ENCODE measurements at regions of chr6 and their contacts with region 1.

Region 1: GRCh38 chr6:107284805-107285204 is 169.5 kb upstream of the BEND3 start:
- DNase-seq: no peak
- ATAC-seq: no peak
- H3K4me3 ChIP-seq: no peak overlapping the region
- H3K27ac ChIP-seq: no peak overlapping the region
- H3K4me1 ChIP-seq: no peaks in the 10 kb centered on the region
- H3K27me3 ChIP-seq: no peaks in the 10 kb centered on the region
- CTCF ChIP-seq: no peak
- POLR2A ChIP-seq: no peak
- RAD21 ChIP-seq: no peak

Region 2: DNA sequence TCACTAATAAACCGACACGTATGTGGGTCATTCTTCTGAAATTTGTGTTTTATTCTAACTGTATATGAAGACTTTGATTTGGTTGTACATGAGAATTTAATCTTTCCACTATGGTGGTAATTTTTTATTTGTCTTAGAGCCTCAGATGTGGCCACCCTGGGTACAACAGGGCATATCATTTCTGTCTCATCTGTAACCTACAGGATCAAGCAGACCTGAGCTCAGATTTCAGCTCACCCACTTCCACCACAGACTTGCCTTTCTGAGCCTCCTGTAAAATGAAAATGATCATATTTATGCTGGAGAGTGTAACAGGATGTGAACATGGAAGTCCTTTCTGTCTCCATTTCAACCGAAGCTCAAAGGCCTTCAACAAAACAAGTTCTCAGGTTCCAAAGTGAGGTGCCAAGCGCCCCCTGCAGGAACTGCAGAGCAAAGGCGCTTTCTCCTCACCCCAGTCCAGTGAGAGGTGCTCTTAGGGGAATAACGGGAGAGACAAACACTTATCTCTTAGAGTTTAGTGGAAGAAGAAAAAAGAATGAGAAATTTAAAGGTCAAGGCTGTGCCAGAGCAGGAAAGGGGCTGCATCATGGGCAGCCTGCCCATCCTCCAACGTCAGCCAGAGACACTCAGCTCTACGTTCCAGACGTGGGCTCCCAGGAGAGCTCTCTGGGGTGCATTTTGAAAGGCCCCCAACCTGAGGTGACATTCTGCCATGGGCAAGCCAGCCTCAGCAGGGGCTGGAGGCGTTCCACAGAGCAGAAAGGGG is 287.2 kb before region 1 on chr6:
- CTCF ChIA-PET with region 1: no interaction called
- POLR2A ChIA-PET with region 1: no interaction called
- dilution Hi-C with region 1: no loop called
- in situ Hi-C with region 1: no loop called
- intact Hi-C with region 1: no loop called
- DNase-seq: peak; percentile 51
- ATAC-seq: peak; percentile 78
- H3K4me3 ChIP-seq: no peak overlapping the region
- H3K27ac ChIP-seq: no peak overlapping the region
- H3K4me1 ChIP-seq: no peaks in the 10 kb centered on the region
- H3K27me3 ChIP-seq: no peaks in the 10 kb centered on the region
- CTCF ChIP-seq: peak; percentile 66
- POLR2A ChIP-seq: no peak
- RAD21 ChIP-seq: peak; percentile 48; the same call in 1 of the 2 replicates

Region 3: GRCh38 chr6:107244082-107244741 is 40.6 kb before region 1 on chr6:
- CTCF ChIA-PET with region 1: no interaction called
- POLR2A ChIA-PET with region 1: no interaction called
- dilution Hi-C with region 1: no loop called
- in situ Hi-C with region 1: no loop called
- intact Hi-C with region 1: no loop called
- DNase-seq: no peak
- ATAC-seq: no peak
- H3K4me3 ChIP-seq: no peak overlapping the region
- H3K27ac ChIP-seq: no peak overlapping the region
- H3K4me1 ChIP-seq: no peaks in the 10 kb centered on the region
- H3K27me3 ChIP-seq: no peaks in the 10 kb centered on the region
- CTCF ChIP-seq: no peak
- POLR2A ChIP-seq: no peak
- RAD21 ChIP-seq: no peak

Region 4: GRCh38 chr6:107331409-107332386 is 46.9 kb after region 1 on chr6:
- CTCF ChIA-PET with region 1: no interaction called
- POLR2A ChIA-PET with region 1: interaction called, 15 read pairs
- dilution Hi-C with region 1: no loop called
- in situ Hi-C with region 1: no loop called
- intact Hi-C with region 1: no loop called
- DNase-seq: peak; percentile 53
- ATAC-seq: no peak
- H3K4me3 ChIP-seq: no peak overlapping the region
- H3K27ac ChIP-seq: no peak overlapping the region
- H3K4me1 ChIP-seq: no peaks in the 10 kb centered on the region
- H3K27me3 ChIP-seq: no peaks in the 10 kb centered on the region
- CTCF ChIP-seq: no peak
- POLR2A ChIP-seq: no peak
- RAD21 ChIP-seq: no peak

Region 5: GRCh38 chr6:107509506-107509905 is 224.7 kb after region 1 on chr6:
- CTCF ChIA-PET with region 1: no interaction called
- POLR2A ChIA-PET with region 1: no interaction called
- dilution Hi-C with region 1: no loop called
- in situ Hi-C with region 1: no loop called
- intact Hi-C with region 1: no loop called
- DNase-seq: peak; percentile 45
- ATAC-seq: peak; percentile 51
- H3K4me3 ChIP-seq: no peak overlapping the region
- H3K27ac ChIP-seq: no peak overlapping the region
- H3K4me1 ChIP-seq: no peaks in the 10 kb centered on the region
- H3K27me3 ChIP-seq: no peaks in the 10 kb centered on the region
- CTCF ChIP-seq: no peak
- POLR2A ChIP-seq: no peak
- RAD21 ChIP-seq: no peak

Region 6: GRCh38 chr6:108145639-108146038 is 860.8 kb after region 1 on chr6:
- CTCF ChIA-PET with region 1: no interaction called
- POLR2A ChIA-PET with region 1: no interaction called
- dilution Hi-C with region 1: no loop called
- in situ Hi-C with region 1: no loop called
- intact Hi-C with region 1: no loop called
- DNase-seq: no peak
- ATAC-seq: no peak
- H3K4me3 ChIP-seq: no peak overlapping the region
- H3K27ac ChIP-seq: no peak overlapping the region
- H3K4me1 ChIP-seq: no peaks in the 10 kb centered on the region
- H3K27me3 ChIP-seq: peaks cover 19% of the 10 kb centered on the region
- CTCF ChIP-seq: no peak
- POLR2A ChIP-seq: no peak
- RAD21 ChIP-seq: no peak